Activated CD8-positive, alpha-beta T cell treated with anti-CD3 and anti-CD28 coated beads for 36 hours (primary cell): ENCODE measurements at regions of chr12 and their contacts with region 1.

Region 1: DNA sequence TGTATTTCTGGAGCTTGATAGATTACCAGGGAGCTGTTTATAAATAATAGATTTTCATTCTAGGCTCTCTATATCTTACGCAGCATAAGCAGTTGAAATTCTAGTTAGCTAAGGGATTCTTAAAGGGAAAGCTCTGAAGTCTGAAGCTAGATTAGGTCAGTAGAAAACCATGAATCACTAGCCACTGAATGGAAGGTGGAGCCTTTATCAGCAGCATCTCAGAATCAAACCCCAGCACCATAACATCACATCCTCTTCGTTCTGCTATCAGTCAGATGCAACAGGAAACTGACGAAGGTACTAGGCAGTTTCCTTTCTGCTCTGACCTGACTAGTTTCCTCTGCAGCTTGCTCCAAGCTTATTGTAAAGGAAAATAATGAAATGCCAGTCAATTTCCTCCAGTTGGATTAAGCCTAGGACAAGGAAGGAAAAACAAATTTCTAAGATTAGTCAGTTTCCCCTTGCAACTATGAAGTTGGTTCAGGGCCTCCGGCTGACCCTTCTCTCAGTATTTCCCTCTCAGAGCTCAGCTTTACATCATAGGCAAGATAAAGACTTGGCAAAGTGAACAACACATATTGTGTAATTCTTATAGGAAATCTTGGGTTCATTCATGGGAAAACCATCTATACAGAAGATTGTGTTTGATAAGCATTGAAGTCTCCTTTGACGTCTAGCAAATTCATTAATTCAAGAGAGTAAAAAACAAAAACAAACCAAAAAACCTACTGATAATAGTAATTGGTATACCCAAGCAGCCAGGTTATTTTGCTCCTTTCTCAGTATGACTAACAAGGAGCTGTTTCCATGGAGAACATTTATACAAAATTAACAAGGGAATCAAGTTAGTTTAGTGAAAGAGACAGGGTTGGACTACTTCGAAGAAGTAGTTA is 43.4 kb upstream of the CFAP54 start:
- DNase-seq: peak; percentile 75
- ATAC-seq: peak; percentile 97
- H3K4me3 Mint-ChIP-seq: peak overlapping the region; percentile 61
- H3K27ac Mint-ChIP-seq: peak overlapping the region; percentile 97
- H3K4me1 Mint-ChIP-seq: peaks cover 41% of the 10 kb centered on the region
- H3K27me3 Mint-ChIP-seq: no peaks in the 10 kb centered on the region
- CTCF ChIP-seq: no peak

Region 2: GRCh38 chr12:96392397-96392796 is 53.5 kb before region 1 on chr12:
- CTCF ChIA-PET with region 1: no interaction called
- POLR2A ChIA-PET with region 1: no interaction called
- intact Hi-C with region 1: no loop called
- DNase-seq: no peak
- ATAC-seq: no peak
- H3K4me3 Mint-ChIP-seq: no peak overlapping the region
- H3K27ac Mint-ChIP-seq: no peak overlapping the region
- H3K4me1 Mint-ChIP-seq: peaks cover 52% of the 10 kb centered on the region
- H3K27me3 Mint-ChIP-seq: no peaks in the 10 kb centered on the region
- CTCF ChIP-seq: no peak

Region 3: GRCh38 chr12:96434107-96434506 is 11.8 kb before region 1 on chr12:
- CTCF ChIA-PET with region 1: interaction called, 11 read pairs
- POLR2A ChIA-PET with region 1: interaction called, 6 read pairs
- intact Hi-C with region 1: no loop called
- DNase-seq: peak; percentile 92
- ATAC-seq: peak; percentile 97
- H3K4me3 Mint-ChIP-seq: peak overlapping the region; percentile 2
- H3K27ac Mint-ChIP-seq: peak overlapping the region; percentile 80
- H3K4me1 Mint-ChIP-seq: peaks cover 29% of the 10 kb centered on the region
- H3K27me3 Mint-ChIP-seq: no peaks in the 10 kb centered on the region
- CTCF ChIP-seq: no peak

Region 4: GRCh38 chr12:96489103-96490056 is 43.4 kb after region 1 on chr12 and contains the start of gene CFAP54:
- CTCF ChIA-PET with region 1: interaction called, 18 read pairs
- POLR2A ChIA-PET with region 1: no interaction called
- intact Hi-C with region 1: no loop called
- DNase-seq: peak; percentile 97
- ATAC-seq: peak; percentile 96
- H3K4me3 Mint-ChIP-seq: peak within 1 kb of the TSS; percentile 84
- H3K27ac Mint-ChIP-seq: peak within 1 kb of the TSS; percentile 53
- H3K4me1 Mint-ChIP-seq: peaks cover 29% of the 10 kb centered on the region
- H3K27me3 Mint-ChIP-seq: no peaks in the 10 kb centered on the region
- CTCF ChIP-seq: peak; percentile 89
- total RNA-seq, gene CFAP54: 0.38 to 0.45 TPM